T-cell (primary cell): ENCODE measurements at regions of chr1 and their contacts with region 1.

Region 1: DNA sequence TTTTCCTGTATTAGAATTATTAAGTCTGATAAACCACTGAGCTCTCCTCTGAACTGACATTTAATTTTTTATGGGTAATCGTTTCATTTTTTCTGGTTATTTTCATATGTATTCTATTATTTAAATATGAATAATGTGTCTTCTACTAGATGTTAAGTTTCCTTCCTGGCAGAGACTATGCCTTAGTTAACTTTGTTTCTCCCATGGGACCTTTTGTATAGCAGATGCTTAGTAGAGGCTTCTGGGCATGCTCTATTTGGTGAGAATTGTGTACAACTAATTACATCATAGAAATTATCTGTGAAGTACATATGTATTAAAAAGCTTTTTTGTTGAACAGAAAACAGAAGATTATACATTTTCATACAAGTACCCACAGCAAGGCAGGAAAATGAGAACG is 23.4 kb downstream of the CTBS start:
- DNase-seq: no peak
- ATAC-seq: no peak
- H3K4me3 ChIP-seq: no peak overlapping the region
- H3K4me3 Mint-ChIP-seq: no peak overlapping the region
- H3K27ac ChIP-seq: no peak overlapping the region
- H3K27ac Mint-ChIP-seq: no peak overlapping the region
- H3K4me1 ChIP-seq: no peaks in the 10 kb centered on the region
- H3K4me1 Mint-ChIP-seq: no peaks in the 10 kb centered on the region
- H3K27me3 ChIP-seq: no peaks in the 10 kb centered on the region
- H3K27me3 Mint-ChIP-seq: no peaks in the 10 kb centered on the region

Region 2: DNA sequence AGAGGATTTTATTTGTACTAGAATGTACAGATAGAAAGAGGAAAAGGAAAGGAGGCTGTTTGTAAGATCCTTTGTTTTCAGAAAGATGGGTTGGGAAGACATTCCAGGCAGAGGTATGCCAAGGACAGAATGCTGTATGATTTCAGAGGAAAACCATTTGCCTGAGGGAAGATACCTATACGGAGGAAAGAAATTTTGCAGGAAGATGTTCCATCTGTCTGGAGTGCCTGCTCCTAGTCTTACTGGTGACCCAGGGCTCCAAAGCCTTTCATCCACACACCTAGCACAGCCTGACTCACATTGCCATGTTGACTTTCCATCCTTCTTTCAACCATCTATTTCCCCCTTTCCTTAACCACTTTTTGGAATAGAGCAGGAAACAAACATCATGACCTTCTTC is 231.2 kb before region 1 on chr1:
- CTCF ChIA-PET with region 1: no interaction called
- POLR2A ChIA-PET with region 1: no interaction called
- DNase-seq: no peak
- ATAC-seq: no peak
- H3K4me3 ChIP-seq: no peak overlapping the region
- H3K4me3 Mint-ChIP-seq: no peak overlapping the region
- H3K27ac ChIP-seq: no peak overlapping the region
- H3K27ac Mint-ChIP-seq: no peak overlapping the region
- H3K4me1 ChIP-seq: no peaks in the 10 kb centered on the region
- H3K4me1 Mint-ChIP-seq: peaks cover 0 to 2% (median 0%) of the 10 kb centered on the region in 3 donors
- H3K27me3 ChIP-seq: no peaks in the 10 kb centered on the region
- H3K27me3 Mint-ChIP-seq: peaks cover 0 to 5% of the 10 kb centered on the region in 2 donors

Region 3: DNA sequence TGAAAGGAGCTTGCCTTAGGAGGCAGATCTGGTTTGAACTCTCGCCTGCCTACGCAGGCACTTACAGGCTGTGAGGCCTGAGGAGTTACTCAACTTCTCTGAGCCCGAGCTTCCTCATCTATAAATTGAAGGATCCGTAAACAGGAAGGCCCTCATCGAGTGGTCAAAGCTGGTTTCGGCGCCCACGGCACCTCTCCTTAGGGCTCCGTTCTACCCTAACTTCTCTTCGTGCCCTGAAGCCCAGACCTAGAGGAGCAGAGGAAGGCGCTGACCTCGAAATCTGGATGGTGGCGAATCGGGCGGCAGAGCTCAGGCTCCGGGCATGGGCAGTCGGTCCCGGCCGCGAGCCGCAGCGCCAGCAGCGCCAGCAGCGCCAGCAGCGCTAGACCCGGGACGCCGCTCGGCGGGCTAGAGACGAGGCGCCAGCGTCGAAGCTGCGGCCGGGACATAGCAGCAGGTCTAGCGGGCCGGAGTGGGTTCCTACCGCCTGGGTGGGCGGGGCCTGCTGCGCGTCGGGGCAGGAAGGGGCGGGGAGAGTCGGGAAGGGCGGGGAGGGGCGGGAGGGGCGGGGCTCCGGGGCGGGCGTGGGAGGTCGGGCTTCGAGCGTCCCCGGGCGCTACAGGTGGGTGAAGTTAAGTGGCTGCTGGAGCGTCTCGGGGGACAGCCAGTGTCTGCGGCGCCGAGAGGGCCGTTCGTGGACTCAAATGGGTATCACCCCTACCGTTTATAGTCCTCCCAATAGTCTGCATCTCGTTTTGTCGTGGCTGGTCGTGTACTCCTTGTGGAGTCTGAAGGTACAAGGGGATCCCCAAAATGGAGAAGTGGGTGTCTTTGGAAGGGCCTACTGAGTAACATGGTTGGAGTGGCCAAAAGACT is 23.4 kb after region 1 on chr1 and contains the start of gene CTBS:
- CTCF ChIA-PET with region 1: no interaction called
- POLR2A ChIA-PET with region 1: interaction called in 1 of 2 experiments, 11 read pairs
- DNase-seq: peak; percentile 62 to 92 (median 77)
- ATAC-seq: peak; percentile 91 to 97 (median 96)
- H3K4me3 ChIP-seq: peak within 1 kb of the TSS; percentile 78 to 82
- H3K4me3 Mint-ChIP-seq: peak within 1 kb of the TSS; percentile 94 to 97 (median 97)
- H3K27ac ChIP-seq: peak within 1 kb of the TSS; percentile 94
- H3K27ac Mint-ChIP-seq: peak within 1 kb of the TSS; percentile 98 to 99
- H3K4me1 ChIP-seq: peaks cover 11 to 14% of the 10 kb centered on the region in 2 experiments
- H3K4me1 Mint-ChIP-seq: peaks cover 41 to 52% (median 44%) of the 10 kb centered on the region in 3 donors
- H3K27me3 ChIP-seq: no peaks in the 10 kb centered on the region
- H3K27me3 Mint-ChIP-seq: no peaks in the 10 kb centered on the region
- total RNA-seq, gene CTBS: 14.8 to 20.3 (median 16.4) TPM